IMR-90 (cell line): ENCODE measurements at regions of chr1 and their contacts with region 1.

Region 1: GRCh38 chr1:25819576-25820246 is at the start of gene MTFR1L:
- DNase-seq: peak; percentile 55
- ATAC-seq: peak; percentile 89
- H3K4me3 ChIP-seq: peak within 1 kb of the TSS; percentile 90
- H3K27ac ChIP-seq: peak within 1 kb of the TSS; percentile 96
- H3K4me1 ChIP-seq: peaks cover 16% of the 10 kb centered on the region
- H3K27me3 ChIP-seq: no peaks in the 10 kb centered on the region
- CTCF ChIP-seq: no peak
- POLR2A ChIP-seq: peak; percentile 66; the same call in 1 of the 2 replicates
- RAD21 ChIP-seq: no peak
- total RNA-seq, gene MTFR1L: 57.2 and 69.7 TPM in 2 replicates

Region 2: GRCh38 chr1:25239681-25240541 is 579.8 kb before region 1 on chr1:
- CTCF ChIA-PET with region 1: no interaction called
- POLR2A ChIA-PET with region 1: no interaction called
- dilution Hi-C with region 1: no loop called
- in situ Hi-C with region 1: loop called (anchors 25 kb)
- intact Hi-C with region 1: loop called (anchors 10 kb)
- DNase-seq: peak; percentile 87
- ATAC-seq: peak; percentile 90
- H3K4me3 ChIP-seq: peak overlapping the region; percentile 56
- H3K27ac ChIP-seq: peak overlapping the region; percentile 87
- H3K4me1 ChIP-seq: peaks cover 4% of the 10 kb centered on the region; the same call in 1 of the 2 replicates
- H3K27me3 ChIP-seq: no peaks in the 10 kb centered on the region
- CTCF ChIP-seq: peak; percentile 71
- POLR2A ChIP-seq: peak; percentile 59
- RAD21 ChIP-seq: peak; percentile 70

Region 3: DNA sequence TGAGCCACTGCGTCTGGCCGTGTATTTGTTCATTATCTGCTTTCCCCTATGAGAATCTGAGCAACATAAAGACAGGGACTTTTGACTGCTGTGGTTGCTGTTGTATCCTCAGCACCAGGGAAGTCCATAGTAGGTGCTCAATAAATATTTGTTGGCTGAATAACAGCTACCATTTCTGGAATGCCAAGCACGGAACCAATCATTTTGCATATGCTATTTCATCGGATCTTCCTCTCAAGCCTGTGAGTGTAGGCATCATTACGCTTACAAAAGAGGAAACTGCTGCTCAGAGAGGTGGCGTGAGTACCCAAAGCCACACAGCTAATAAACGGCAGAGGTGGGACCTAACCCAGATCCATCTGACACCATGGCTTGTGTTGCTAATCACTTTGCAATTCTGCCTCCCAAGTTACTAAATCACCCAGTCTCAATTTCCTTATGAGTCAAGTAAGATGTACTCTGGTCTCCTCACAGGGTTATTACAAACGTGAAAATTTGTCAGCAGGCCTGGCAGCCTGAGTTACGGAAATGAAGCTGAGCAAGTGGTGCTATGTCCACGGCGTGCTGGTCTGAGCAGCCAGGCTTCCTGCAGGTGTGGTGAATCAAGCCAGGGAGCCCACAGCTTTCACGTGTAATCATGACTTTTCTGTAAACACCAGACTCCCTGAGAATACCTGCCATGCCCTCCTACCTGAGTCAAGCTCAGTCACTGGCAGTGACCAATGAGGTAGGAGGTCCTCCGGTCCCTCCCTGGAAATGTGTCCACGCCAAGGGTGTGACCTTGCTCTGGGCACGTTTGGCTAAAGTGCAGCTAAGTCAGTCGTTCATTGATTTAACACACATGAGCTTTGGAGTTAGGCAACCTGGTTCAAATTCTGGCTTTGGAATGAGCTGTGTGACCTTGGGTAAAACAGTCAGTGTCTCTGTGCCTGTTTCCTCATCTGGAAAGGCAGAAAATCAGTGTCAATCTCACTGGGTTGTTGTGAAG is 394.3 kb before region 1 on chr1:
- CTCF ChIA-PET with region 1: no interaction called
- POLR2A ChIA-PET with region 1: no interaction called
- dilution Hi-C with region 1: no loop called
- in situ Hi-C with region 1: loop called (anchors 25 kb)
- intact Hi-C with region 1: no loop called
- DNase-seq: peak; percentile 33
- ATAC-seq: no peak
- H3K4me3 ChIP-seq: no peak overlapping the region
- H3K27ac ChIP-seq: no peak overlapping the region
- H3K4me1 ChIP-seq: no peaks in the 10 kb centered on the region
- H3K27me3 ChIP-seq: peaks cover 4% of the 10 kb centered on the region; the same call in 1 of the 2 replicates
- CTCF ChIP-seq: no peak
- POLR2A ChIP-seq: no peak
- RAD21 ChIP-seq: no peak

Region 4: DNA sequence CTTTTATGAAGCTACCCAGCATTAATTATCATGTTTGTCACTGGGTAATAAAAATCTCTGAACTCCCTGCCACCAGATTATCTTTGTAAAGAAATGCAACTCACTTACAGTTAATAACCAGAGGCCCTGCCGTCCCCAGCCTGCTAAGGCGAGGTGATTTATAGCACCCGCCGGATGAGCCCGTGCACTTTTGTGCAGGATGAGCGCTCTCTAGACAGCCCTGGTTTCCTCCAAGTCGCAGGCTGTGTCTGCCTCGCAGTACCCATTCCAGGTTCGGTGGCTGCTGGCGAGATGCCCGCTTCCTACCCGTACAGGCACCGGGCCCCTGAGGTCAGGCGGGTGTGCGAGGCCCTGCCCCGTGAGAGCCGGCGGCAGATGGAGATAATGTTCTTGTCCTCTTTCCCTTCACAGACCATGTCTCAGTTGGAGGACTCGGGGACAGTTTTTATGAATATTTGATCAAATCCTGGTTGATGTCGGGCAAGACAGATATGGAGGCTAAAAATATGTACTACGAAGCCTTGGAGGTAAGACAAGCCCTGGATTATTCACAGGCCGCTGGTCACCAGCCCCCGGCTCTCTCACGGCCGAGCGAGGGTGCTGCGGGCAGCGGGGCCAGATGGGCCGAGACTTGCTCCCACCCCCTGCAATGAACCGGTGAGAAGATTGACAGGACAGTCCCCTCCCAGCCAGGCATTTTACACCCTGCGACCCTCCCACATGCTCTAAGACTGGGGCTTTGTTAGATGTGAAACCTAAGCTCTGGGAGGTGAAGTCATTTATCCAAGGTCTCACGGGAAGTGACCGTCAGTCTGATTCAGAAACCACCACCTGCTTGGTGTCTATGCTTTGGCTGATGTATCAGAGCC is 48.2 kb before region 1 on chr1:
- CTCF ChIA-PET with region 1: no interaction called
- POLR2A ChIA-PET with region 1: no interaction called
- dilution Hi-C with region 1: no loop called
- in situ Hi-C with region 1: no loop called
- intact Hi-C with region 1: no loop called
- DNase-seq: peak; percentile 5
- ATAC-seq: no peak
- H3K4me3 ChIP-seq: no peak overlapping the region
- H3K27ac ChIP-seq: no peak overlapping the region
- H3K4me1 ChIP-seq: peaks cover 4% of the 10 kb centered on the region; the same call in 1 of the 2 replicates
- H3K27me3 ChIP-seq: no peaks in the 10 kb centered on the region
- CTCF ChIP-seq: no peak
- POLR2A ChIP-seq: no peak
- RAD21 ChIP-seq: no peak

Region 5: GRCh38 chr1:25837262-25837875 is 17.7 kb after region 1 on chr1:
- CTCF ChIA-PET with region 1: interaction called, 4 read pairs
- POLR2A ChIA-PET with region 1: interaction called, 16 read pairs
- dilution Hi-C with region 1: no loop called
- in situ Hi-C with region 1: no loop called
- intact Hi-C with region 1: no loop called
- DNase-seq: no peak
- ATAC-seq: no peak
- H3K4me3 ChIP-seq: no peak overlapping the region
- H3K27ac ChIP-seq: no peak overlapping the region
- H3K4me1 ChIP-seq: no peaks in the 10 kb centered on the region
- H3K27me3 ChIP-seq: no peaks in the 10 kb centered on the region
- CTCF ChIP-seq: peak; percentile 33
- POLR2A ChIP-seq: no peak
- RAD21 ChIP-seq: peak; percentile 7; the same call in 1 of the 2 replicates

Region 6: DNA sequence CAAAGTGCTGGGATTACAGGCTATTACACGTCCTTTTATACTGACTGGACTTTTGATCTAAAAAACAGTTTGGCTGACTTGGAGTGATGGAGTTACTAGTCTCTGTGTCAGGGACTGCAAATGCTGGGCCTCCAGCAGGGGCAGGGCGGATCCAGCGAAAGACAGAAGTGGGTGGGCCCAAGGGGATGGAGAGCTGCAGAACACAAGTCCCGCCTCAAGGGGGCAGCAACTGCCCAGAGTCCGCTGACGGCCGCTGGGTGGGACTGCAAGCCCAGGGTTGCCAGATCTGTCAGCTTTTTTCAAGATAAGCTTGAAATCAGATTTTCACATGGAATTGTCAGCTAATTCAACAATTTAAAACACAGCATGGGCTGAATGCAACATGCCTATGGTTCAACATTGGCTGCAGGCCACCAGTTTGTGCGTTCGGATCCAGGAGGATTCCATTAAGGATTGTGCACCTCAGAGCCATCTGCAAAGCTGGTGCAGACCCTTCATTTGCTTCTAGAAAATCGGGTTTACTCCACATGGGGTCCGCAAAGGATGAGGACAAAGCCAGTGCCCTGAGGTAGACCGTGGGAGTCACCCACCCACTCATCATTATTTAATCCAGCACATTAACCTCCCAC is 75.8 kb after region 1 on chr1:
- CTCF ChIA-PET with region 1: interaction called, 3 read pairs
- POLR2A ChIA-PET with region 1: no interaction called
- dilution Hi-C with region 1: no loop called
- in situ Hi-C with region 1: no loop called
- intact Hi-C with region 1: loop called (anchors 5 kb)
- DNase-seq: peak; percentile 92
- ATAC-seq: peak; percentile 87
- H3K4me3 ChIP-seq: no peak overlapping the region
- H3K27ac ChIP-seq: peak overlapping the region; percentile 11
- H3K4me1 ChIP-seq: peaks cover 33% of the 10 kb centered on the region
- H3K27me3 ChIP-seq: no peaks in the 10 kb centered on the region
- CTCF ChIP-seq: peak; percentile 100
- POLR2A ChIP-seq: peak; percentile 52; the same call in 1 of the 2 replicates
- RAD21 ChIP-seq: peak; percentile 99

Region 7: DNA sequence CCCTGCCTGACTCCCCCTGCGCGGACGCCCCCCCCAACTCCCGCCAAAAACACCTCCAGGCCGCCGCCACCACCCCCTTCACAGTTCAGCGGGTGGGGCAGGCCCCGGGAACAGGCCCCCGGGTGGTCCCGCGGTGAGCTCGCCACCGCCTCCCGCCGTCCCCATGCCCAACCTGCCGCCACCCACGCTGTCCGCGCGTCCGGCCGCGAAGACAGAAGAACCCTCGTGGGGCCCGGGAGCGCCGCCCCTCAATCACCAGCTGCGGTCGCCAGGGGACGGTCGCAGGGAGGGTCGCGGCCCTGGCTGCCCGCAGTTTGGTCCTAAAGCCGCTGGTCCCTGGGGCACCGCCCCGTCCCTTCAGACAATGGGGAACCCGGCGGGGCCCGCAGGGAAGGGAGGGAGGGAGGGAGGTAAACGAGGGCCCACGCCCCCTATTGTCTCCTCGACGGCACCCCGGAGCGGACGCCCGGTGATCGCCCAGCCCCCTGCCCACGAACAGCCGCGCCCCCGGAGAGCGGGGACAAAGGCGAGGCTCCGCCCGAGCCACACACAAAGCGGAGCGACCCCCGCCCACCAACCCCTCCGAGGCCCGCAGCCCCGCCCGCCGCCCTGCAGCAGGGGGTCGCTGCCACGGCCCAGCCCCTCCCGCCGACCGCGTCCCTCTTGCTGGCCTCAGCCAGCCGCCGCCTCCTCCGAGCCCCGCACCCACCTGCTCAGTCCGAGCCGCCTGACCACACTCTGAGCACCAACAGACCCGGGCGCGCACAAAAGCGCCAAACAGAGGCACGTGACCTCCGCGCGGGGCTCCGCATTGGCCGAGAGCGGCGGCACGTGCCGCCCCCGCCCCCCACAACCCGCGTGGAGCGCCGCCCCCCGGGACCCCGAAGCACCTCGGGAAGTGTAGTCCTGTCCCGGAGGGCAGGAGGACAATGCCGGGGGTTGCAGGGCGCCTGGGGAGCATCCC is 86.3 kb after region 1 on chr1 and contains the start of gene STMN1:
- CTCF ChIA-PET with region 1: no interaction called
- POLR2A ChIA-PET with region 1: no interaction called
- dilution Hi-C with region 1: no loop called
- in situ Hi-C with region 1: no loop called
- intact Hi-C with region 1: no loop called
- DNase-seq: peak; percentile 89
- ATAC-seq: peak; percentile 81
- H3K4me3 ChIP-seq: peak within 1 kb of the TSS; percentile 71
- H3K27ac ChIP-seq: peak within 1 kb of the TSS; percentile 48
- H3K4me1 ChIP-seq: peaks cover 5% of the 10 kb centered on the region
- H3K27me3 ChIP-seq: no peaks in the 10 kb centered on the region
- CTCF ChIP-seq: no peak
- POLR2A ChIP-seq: peak; percentile 95
- RAD21 ChIP-seq: no peak
- total RNA-seq, gene STMN1: 93.0 and 194 TPM in 2 replicates

Region 8: DNA sequence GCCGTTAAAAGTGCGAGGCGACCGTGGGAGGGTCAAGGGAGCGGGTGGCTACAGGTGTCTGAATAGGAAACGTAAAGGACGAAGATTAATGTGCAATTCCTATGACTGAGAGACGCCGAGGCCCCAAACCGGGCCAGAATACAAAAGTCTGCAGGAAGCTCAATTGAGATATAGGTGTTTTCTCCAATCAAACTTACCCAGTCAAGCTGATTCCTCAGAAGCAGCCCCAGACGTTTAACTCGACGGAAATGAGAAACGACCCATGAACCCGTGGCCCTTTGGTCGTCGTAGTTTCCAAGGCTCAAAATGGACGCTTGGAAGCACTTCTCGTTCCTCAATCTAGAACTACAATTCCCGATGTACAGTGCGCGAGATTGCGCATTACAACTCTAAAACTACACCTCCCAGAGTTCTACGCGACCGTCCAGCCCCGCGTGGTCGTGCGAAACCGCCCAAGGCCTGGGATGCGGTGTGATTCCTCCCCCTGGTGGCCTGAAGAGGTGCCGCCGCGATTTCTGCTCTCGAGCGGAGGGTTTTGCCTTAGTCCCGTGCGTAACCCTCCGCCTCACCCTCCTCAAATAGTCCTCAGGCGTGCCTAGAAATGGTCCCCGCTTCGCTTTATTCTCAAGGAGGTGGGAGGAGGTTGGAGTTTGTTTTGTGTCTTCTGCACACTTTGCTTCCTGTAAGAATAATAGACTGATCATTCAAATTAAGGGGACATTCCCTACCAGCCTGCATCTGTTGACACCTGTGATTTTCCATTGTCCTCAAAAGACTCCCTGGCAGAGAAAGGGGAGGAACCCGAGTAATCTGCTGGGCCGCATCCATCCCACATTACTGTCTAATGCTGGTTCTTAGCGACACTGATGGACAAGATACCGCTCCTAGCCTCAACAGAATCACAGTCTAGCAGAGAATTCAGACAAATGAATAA is 178.4 kb after region 1 on chr1 and contains the start of gene PAFAH2:
- CTCF ChIA-PET with region 1: no interaction called
- POLR2A ChIA-PET with region 1: no interaction called
- dilution Hi-C with region 1: no loop called
- in situ Hi-C with region 1: loop called (anchors 10 kb)
- intact Hi-C with region 1: loop called (anchors 1 kb)
- DNase-seq: peak; percentile 100
- ATAC-seq: peak; percentile 99
- H3K4me3 ChIP-seq: peak within 1 kb of the TSS; percentile 48
- H3K27ac ChIP-seq: peak within 1 kb of the TSS; percentile 55
- H3K4me1 ChIP-seq: peaks cover 4% of the 10 kb centered on the region
- H3K27me3 ChIP-seq: no peaks in the 10 kb centered on the region
- CTCF ChIP-seq: peak; percentile 99
- POLR2A ChIP-seq: no peak; the same call in none of the 2 replicates
- RAD21 ChIP-seq: peak; percentile 99
- total RNA-seq, gene PAFAH2: 11.9 and 12.2 TPM in 2 replicates